BJ (cell line): ENCODE measurements at regions of chr16 and their contacts with region 1.

Region 1: GRCh38 chr16:80837421-80838231 is 33.2 kb upstream of the CDYL2 start:
- DNase-seq: peak; percentile 5
- H3K4me3 ChIP-seq: no peak overlapping the region
- H3K27me3 ChIP-seq: no peaks in the 10 kb centered on the region
- CTCF ChIP-seq: no peak

Region 2: GRCh38 chr16:80433623-80434022 is 404.0 kb before region 1 on chr16:
- CTCF ChIA-PET with region 1: no interaction called
- POLR2A ChIA-PET with region 1: no interaction called
- DNase-seq: no peak
- H3K4me3 ChIP-seq: no peak overlapping the region
- H3K27me3 ChIP-seq: no peaks in the 10 kb centered on the region
- CTCF ChIP-seq: no peak

Region 3: GRCh38 chr16:80824718-80825364 is 12.8 kb before region 1 on chr16:
- CTCF ChIA-PET with region 1: interaction called, 14 read pairs
- POLR2A ChIA-PET with region 1: no interaction called
- DNase-seq: peak; percentile 11
- H3K4me3 ChIP-seq: no peak overlapping the region
- H3K27me3 ChIP-seq: peaks cover 2% of the 10 kb centered on the region; the same call in 1 of the 2 replicates
- CTCF ChIP-seq: peak; percentile 82